Gastrocnemius medialis (tissue), 4 donors: ENCODE measurements at regions of chr9 and their contacts with region 1.

Region 1: DNA sequence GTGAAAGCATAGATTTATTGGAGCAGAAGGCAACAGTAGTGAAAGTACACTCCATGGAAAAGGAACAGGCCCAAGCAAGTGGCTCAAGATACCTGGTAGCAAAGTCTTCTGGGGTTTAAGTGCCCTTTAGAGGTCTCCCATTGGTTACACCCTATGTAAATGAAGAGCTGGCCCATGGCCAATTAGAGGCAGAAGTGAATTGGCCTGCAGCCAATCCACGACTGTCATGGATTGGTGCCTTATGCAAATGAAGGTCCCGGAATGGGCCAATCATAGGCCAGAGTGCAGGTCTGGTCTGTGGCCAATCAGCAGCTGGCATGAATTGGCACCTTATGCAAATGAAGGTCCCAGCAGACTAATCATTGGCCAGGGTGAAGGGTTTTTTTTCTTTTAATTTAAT is 64.2 kb upstream of the PCSK5 start:
- DNase-seq: no peak
- ATAC-seq: no peak
- H3K4me3 ChIP-seq: no peak overlapping the region
- H3K27ac ChIP-seq: no peak overlapping the region
- H3K4me1 ChIP-seq: peaks cover 0 to 6% of the 10 kb centered on the region in 2 donors
- H3K27me3 ChIP-seq: no peaks in the 10 kb centered on the region
- CTCF ChIP-seq: no peak
- POLR2A ChIP-seq: no peak

Region 2: DNA sequence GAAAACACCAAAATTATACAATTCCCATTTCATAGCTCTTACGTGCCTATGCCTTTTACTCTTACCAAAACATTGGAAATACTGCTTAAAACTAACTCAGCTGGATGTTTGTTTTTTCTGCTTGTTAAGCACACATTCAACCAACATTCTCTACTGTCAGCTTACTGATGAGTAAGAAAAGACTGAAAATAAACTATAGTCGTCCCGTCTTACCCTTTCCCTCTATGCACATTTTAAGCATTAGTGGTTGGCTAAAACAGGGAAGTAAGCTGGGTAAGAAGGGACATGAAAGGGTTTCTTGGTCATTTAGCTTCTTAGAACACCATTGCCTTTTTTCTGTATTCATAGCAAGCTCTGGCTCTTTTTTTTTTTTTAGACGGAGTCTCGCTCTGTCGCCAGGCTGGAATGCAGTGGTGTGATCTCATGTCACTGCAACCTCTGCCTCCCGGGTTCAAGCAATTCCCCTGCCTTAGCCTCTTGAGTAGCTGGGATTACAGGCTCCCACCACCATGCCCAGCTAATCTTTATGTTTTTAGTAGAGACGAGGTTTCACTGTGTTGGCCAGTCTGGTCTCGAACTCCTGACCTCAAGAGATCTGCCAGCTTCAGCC is 167.9 kb before region 1 on chr9:
- in situ Hi-C with region 1: loop called in 1 of 4 experiments (anchors 25 kb)
- intact Hi-C with region 1: no loop called
- DNase-seq: no peak
- ATAC-seq: no peak
- H3K4me3 ChIP-seq: no peak overlapping the region
- H3K27ac ChIP-seq: no peak overlapping the region
- H3K4me1 ChIP-seq: no peaks in the 10 kb centered on the region
- H3K27me3 ChIP-seq: no peaks in the 10 kb centered on the region
- CTCF ChIP-seq: no peak
- POLR2A ChIP-seq: no peak